WTC11 (cell line): ENCODE measurements at regions of chr19 and their contacts with region 1.

Region 1: GRCh38 chr19:10580979-10581631 is 6.0 kb downstream of the AP1M2 start:
- DNase-seq: peak; percentile 94
- ATAC-seq: peak; percentile 91
- H3K4me3 Mint-ChIP-seq: no peak overlapping the region
- H3K27ac Mint-ChIP-seq: peak overlapping the region; percentile 84
- H3K4me1 Mint-ChIP-seq: peaks cover 5% of the 10 kb centered on the region
- H3K27me3 Mint-ChIP-seq: no peaks in the 10 kb centered on the region
- CTCF ChIP-seq: peak; percentile 96

Region 2: GRCh38 chr19:10450191-10450852 is 130.8 kb before region 1 on chr19:
- CTCF ChIA-PET with region 1: no interaction called
- POLR2A ChIA-PET with region 1: no interaction called
- DNase-seq: no peak
- ATAC-seq: no peak
- H3K4me3 Mint-ChIP-seq: no peak overlapping the region
- H3K27ac Mint-ChIP-seq: no peak overlapping the region
- H3K4me1 Mint-ChIP-seq: peaks cover 6% of the 10 kb centered on the region
- H3K27me3 Mint-ChIP-seq: no peaks in the 10 kb centered on the region; the same call in 1 of the 2 replicates
- CTCF ChIP-seq: no peak

Region 3: GRCh38 chr19:10478903-10479384 is 102.2 kb before region 1 on chr19:
- CTCF ChIA-PET with region 1: interaction called, 11 read pairs
- POLR2A ChIA-PET with region 1: no interaction called
- DNase-seq: peak; percentile 94
- ATAC-seq: peak; percentile 97
- H3K4me3 Mint-ChIP-seq: peak overlapping the region; percentile 53
- H3K27ac Mint-ChIP-seq: no peak overlapping the region
- H3K4me1 Mint-ChIP-seq: peaks cover 4% of the 10 kb centered on the region
- H3K27me3 Mint-ChIP-seq: peaks cover 22% of the 10 kb centered on the region
- CTCF ChIP-seq: peak; percentile 77; the same call in 1 of the 2 replicates

Region 4: DNA sequence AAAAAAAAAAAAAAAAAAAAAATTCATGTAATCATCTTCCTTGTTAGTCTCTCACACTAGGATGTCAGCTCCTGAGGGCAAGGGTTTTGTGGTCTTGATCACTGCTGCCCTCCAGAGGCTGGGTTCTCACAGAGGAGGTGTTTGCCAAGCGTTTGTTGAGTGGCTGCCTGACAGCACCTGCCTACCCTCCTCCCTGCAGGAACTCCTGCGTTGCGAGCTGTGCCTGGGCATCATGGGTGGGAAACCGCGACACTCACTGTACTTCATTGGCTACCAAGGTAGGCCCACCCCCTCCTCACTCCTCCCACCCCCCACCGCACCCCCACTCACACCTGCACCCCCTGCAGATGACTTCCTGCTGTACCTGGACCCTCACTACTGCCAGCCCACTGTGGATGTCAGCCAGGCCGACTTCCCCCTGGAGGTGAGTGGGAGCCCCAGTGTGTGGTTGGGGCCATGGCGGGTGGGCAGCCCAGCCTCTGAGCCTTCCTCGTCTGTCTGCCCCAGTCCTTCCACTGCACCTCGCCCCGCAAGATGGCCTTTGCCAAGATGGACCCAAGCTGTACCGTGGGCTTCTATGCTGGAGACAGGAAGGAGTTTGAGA is 29.3 kb before region 1 on chr19:
- CTCF ChIA-PET with region 1: interaction called, 10 read pairs
- POLR2A ChIA-PET with region 1: no interaction called
- DNase-seq: peak; percentile 41
- ATAC-seq: peak; percentile 38
- H3K4me3 Mint-ChIP-seq: no peak overlapping the region
- H3K27ac Mint-ChIP-seq: no peak overlapping the region
- H3K4me1 Mint-ChIP-seq: no peaks in the 10 kb centered on the region
- H3K27me3 Mint-ChIP-seq: no peaks in the 10 kb centered on the region
- CTCF ChIP-seq: no peak

Region 5: GRCh38 chr19:10602330-10603083 is 21.4 kb after region 1 on chr19:
- CTCF ChIA-PET with region 1: interaction called, 26 read pairs
- POLR2A ChIA-PET with region 1: interaction called, 3 read pairs
- DNase-seq: peak; percentile 91
- ATAC-seq: peak; percentile 95
- H3K4me3 Mint-ChIP-seq: peak overlapping the region; percentile 84
- H3K27ac Mint-ChIP-seq: no peak overlapping the region
- H3K4me1 Mint-ChIP-seq: peaks cover 12% of the 10 kb centered on the region
- H3K27me3 Mint-ChIP-seq: peaks cover 18% of the 10 kb centered on the region
- CTCF ChIP-seq: no peak

Region 6: DNA sequence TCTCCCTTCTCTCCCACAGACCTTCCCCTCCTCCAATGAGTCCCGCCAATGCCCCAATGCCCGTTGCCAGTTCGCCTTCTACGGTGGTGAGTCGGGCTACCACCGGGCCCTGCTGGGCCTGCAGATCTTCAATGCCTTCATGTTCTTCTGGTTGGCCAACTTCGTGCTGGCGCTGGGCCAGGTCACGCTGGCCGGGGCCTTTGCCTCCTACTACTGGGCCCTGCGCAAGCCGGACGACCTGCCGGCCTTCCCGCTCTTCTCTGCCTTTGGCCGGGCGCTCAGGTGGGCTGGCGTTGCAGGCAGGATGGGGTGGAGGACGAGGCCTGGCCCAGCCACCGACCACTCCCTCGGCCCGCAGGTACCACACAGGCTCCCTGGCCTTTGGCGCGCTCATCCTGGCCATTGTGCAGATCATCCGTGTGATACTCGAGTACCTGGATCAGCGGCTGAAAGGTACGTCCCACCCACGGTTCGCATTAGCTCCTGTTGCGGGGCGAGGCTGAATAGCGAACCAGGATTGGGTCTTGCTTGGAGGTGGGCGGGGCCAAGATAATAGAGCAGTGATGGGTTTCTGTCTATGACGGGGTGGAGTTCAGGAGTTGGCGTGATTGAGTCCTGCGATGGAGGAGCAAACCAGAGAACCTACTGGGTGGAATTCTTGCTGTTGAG is 55.3 kb after region 1 on chr19:
- CTCF ChIA-PET with region 1: interaction called, 276 read pairs
- POLR2A ChIA-PET with region 1: no interaction called
- DNase-seq: peak; percentile 61
- ATAC-seq: peak; percentile 93
- H3K4me3 Mint-ChIP-seq: no peak overlapping the region
- H3K27ac Mint-ChIP-seq: peak overlapping the region; percentile 99
- H3K4me1 Mint-ChIP-seq: peaks cover 9% of the 10 kb centered on the region
- H3K27me3 Mint-ChIP-seq: no peaks in the 10 kb centered on the region
- CTCF ChIP-seq: no peak